Ascending aorta (tissue), 2 donors: ENCODE measurements at regions of chr3 and their contacts with region 1.

Region 1: GRCh38 chr3:37590328-37591079 is 271.2 kb upstream of the CTDSPL start:
- DNase-seq: peak; percentile 63 to 92
- H3K4me3 ChIP-seq: no peak overlapping the region
- H3K27ac ChIP-seq: peak overlapping the region; percentile 95 to 96
- H3K4me1 ChIP-seq: peaks cover 43 to 83% of the 10 kb centered on the region in 2 donors
- H3K27me3 ChIP-seq: no peaks in the 10 kb centered on the region
- CTCF ChIP-seq: no peak

Region 2: GRCh38 chr3:37601832-37602231 is 11.3 kb after region 1 on chr3:
- intact Hi-C with region 1: loop called (anchors 2 kb)
- DNase-seq: peak; percentile 28 to 80
- H3K4me3 ChIP-seq: no peak overlapping the region
- H3K27ac ChIP-seq: peak overlapping the region; percentile 91 to 92
- H3K4me1 ChIP-seq: peaks cover 8 to 53% of the 10 kb centered on the region in 2 donors
- H3K27me3 ChIP-seq: no peaks in the 10 kb centered on the region
- CTCF ChIP-seq: no peak